Ascending aorta (tissue), 2 donors: ENCODE measurements at regions of chr2 and their contacts with region 1.

Region 1: GRCh38 chr2:237456200-237456843 is 30.7 kb upstream of the MLPH start:
- DNase-seq: peak; percentile 84 to 97
- H3K4me3 ChIP-seq: no peak overlapping the region
- H3K27ac ChIP-seq: peak overlapping the region; percentile 82 to 88
- H3K4me1 ChIP-seq: peaks cover 5 to 25% of the 10 kb centered on the region in 2 donors
- H3K27me3 ChIP-seq: no peaks in the 10 kb centered on the region
- CTCF ChIP-seq: no peak

Region 2: GRCh38 chr2:237421542-237422116 is 34.7 kb before region 1 on chr2:
- intact Hi-C with region 1: loop called (anchors 5 kb)
- DNase-seq: peak in 1 of 2 donors; percentile 89
- H3K4me3 ChIP-seq: peak overlapping the region; percentile 7 to 57
- H3K27ac ChIP-seq: peak overlapping the region; percentile 27 to 55
- H3K4me1 ChIP-seq: peaks cover 0 to 5% of the 10 kb centered on the region in 2 donors
- H3K27me3 ChIP-seq: no peaks in the 10 kb centered on the region
- CTCF ChIP-seq: peak; percentile 81 to 89 (median 83)

Region 3: GRCh38 chr2:237435844-237436587 is 20.3 kb before region 1 on chr2:
- intact Hi-C with region 1: loop called (anchors 2 kb)
- DNase-seq: peak in 1 of 2 donors; percentile 87
- H3K4me3 ChIP-seq: no peak overlapping the region
- H3K27ac ChIP-seq: peak overlapping the region; percentile 78 to 85
- H3K4me1 ChIP-seq: peaks cover 11 to 33% of the 10 kb centered on the region in 2 donors
- H3K27me3 ChIP-seq: no peaks in the 10 kb centered on the region
- CTCF ChIP-seq: no peak

Region 4: GRCh38 chr2:238030422-238031154 is 574.3 kb after region 1 on chr2:
- intact Hi-C with region 1: no loop called
- DNase-seq: no peak
- H3K4me3 ChIP-seq: no peak overlapping the region
- H3K27ac ChIP-seq: no peak overlapping the region
- H3K4me1 ChIP-seq: no peaks in the 10 kb centered on the region
- H3K27me3 ChIP-seq: no peaks in the 10 kb centered on the region
- CTCF ChIP-seq: no peak